ENCODE measurements at regions of chr1 and their contacts with region 1.

Region 1: DNA sequence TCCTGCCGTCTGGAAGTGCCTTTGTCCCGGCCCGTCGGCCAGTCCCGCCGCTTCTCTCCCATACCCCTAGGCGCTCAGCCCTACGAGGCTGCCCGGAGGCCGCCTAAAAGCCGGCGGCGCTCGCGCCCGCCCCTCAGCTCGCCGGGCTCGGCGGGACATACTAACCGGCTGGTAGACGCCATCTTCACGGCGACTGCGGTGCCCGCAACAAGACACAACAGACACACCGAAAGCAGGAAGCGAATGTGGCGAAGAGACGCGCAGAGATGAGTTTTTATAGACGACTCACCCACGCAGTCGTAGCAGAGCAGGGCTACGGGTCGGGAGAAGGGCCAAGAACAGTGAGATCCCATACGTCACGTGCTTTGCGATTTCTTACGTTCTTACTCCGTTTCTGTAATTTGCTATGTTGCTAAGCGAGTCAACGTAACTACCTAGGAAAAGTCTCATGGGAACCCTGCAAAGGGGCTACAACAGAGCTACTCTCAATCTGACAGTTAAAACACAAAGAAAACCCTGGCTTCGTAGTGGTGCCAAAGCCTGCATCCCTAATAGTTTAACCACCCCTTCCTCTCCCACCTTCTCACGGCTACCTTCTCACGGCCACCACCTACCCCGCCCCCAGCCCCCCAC is at the start of gene GTF2B:
- DNase-seq: peak; percentile 98
- ATAC-seq: peak; percentile 92
- H3K4me3 ChIP-seq: peak within 1 kb of the TSS; percentile 84 to 99 (median 89)
- H3K4me3 Mint-ChIP-seq: peak within 1 kb of the TSS; percentile 95
- H3K27ac ChIP-seq: peak within 1 kb of the TSS; percentile 83 to 89
- H3K27ac Mint-ChIP-seq: peak within 1 kb of the TSS; percentile 97
- H3K4me1 ChIP-seq: peaks cover 19 to 28% of the 10 kb centered on the region in 2 donors
- H3K4me1 Mint-ChIP-seq: peaks cover 39% of the 10 kb centered on the region
- H3K27me3 ChIP-seq: no peaks in the 10 kb centered on the region
- H3K27me3 Mint-ChIP-seq: no peaks in the 10 kb centered on the region
- CTCF ChIP-seq: no peak
- total RNA-seq, gene GTF2B: 32.0 and 36.8 TPM in 2 replicates

Region 2: GRCh38 chr1:87335175-87335884 is 1556.1 kb before region 1 on chr1:
- CTCF ChIA-PET with region 1: no interaction called
- POLR2A ChIA-PET with region 1: no interaction called
- intact Hi-C with region 1: loop called (anchors 10 kb)
- DNase-seq: peak; percentile 79
- ATAC-seq: peak; percentile 63
- H3K4me3 ChIP-seq: peak overlapping the region; percentile 47 to 72 (median 66)
- H3K4me3 Mint-ChIP-seq: peak overlapping the region; percentile 83
- H3K27ac ChIP-seq: peak overlapping the region; percentile 46 to 82
- H3K27ac Mint-ChIP-seq: peak overlapping the region; percentile 94
- H3K4me1 ChIP-seq: peaks cover 46 to 49% of the 10 kb centered on the region in 2 donors
- H3K4me1 Mint-ChIP-seq: peaks cover 57% of the 10 kb centered on the region
- H3K27me3 ChIP-seq: no peaks in the 10 kb centered on the region
- H3K27me3 Mint-ChIP-seq: no peaks in the 10 kb centered on the region
- CTCF ChIP-seq: peak; percentile 42

Region 3: DNA sequence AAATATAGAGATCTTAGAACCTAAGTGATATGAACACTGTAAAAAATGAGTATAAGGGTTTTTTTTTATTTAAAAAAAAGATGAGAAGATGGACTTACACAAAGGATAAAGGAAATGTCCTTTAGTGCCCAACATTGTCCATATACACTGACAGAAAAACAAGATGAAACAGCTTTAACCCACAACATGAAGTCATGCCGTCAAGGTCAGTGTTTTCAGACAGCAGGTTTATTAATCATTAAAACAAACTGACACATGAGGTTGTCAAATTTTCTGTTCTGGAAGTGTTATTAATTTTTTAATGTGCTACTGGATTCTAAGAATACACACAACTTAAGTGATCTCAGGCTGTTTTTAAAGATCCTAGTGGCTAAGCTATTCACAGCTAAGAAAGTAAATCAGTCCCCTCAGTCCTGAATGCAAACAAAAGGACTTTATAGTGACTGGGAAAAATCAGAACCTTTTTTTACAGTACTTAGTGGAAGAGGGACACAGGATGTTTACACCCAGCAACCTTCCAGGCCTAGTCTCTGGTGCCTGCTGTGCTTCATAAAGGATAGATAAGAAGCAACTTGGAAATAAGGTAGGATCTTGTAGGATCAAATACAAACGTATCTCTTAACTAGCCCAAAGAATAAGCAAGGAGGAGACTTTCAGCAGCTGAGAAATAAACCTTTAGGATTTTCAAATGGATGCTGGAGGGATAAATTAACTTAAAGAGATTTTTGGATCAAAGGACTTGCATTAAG is 229.3 kb before region 1 on chr1:
- CTCF ChIA-PET with region 1: no interaction called
- POLR2A ChIA-PET with region 1: no interaction called
- intact Hi-C with region 1: no loop called
- DNase-seq: no peak
- ATAC-seq: no peak
- H3K4me3 ChIP-seq: no peak overlapping the region
- H3K4me3 Mint-ChIP-seq: no peak overlapping the region
- H3K27ac ChIP-seq: no peak overlapping the region
- H3K27ac Mint-ChIP-seq: no peak overlapping the region
- H3K4me1 ChIP-seq: peaks cover 7 to 8% of the 10 kb centered on the region in 2 donors
- H3K4me1 Mint-ChIP-seq: peaks cover 16% of the 10 kb centered on the region
- H3K27me3 ChIP-seq: no peaks in the 10 kb centered on the region
- H3K27me3 Mint-ChIP-seq: peaks cover 10% of the 10 kb centered on the region
- CTCF ChIP-seq: no peak

Region 4: DNA sequence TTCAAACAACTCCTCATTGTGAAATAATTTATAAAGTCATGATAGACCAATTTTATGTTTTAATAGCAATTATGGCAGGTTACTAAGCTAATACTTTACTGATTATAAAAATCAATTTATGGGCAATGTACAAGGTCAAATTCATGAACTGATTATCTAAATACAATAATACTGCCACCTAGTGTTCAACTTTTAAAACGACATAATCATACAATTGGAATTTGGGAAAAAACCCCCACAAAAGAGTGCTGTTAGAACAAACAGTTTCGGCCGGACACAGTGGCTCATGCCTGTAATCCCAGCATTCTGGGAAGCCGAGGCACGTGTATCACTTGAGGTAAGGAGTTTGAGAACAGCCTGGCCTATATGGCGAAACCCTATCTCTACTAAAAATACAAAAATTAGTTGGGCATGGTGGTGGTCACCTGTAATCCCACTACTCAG is 14.0 kb before region 1 on chr1:
- CTCF ChIA-PET with region 1: interaction called, 10 read pairs
- POLR2A ChIA-PET with region 1: no interaction called
- intact Hi-C with region 1: no loop called
- DNase-seq: peak; percentile 47
- ATAC-seq: no peak
- H3K4me3 ChIP-seq: no peak overlapping the region
- H3K4me3 Mint-ChIP-seq: no peak overlapping the region
- H3K27ac ChIP-seq: no peak overlapping the region
- H3K27ac Mint-ChIP-seq: no peak overlapping the region
- H3K4me1 ChIP-seq: no peaks in the 10 kb centered on the region
- H3K4me1 Mint-ChIP-seq: peaks cover 20% of the 10 kb centered on the region
- H3K27me3 ChIP-seq: no peaks in the 10 kb centered on the region
- H3K27me3 Mint-ChIP-seq: no peaks in the 10 kb centered on the region
- CTCF ChIP-seq: peak; percentile 81

Region 5: GRCh38 chr1:89065079-89065868 is 173.8 kb after region 1 on chr1 and contains the start of gene GBP1:
- CTCF ChIA-PET with region 1: no interaction called
- POLR2A ChIA-PET with region 1: no interaction called
- intact Hi-C with region 1: loop called (anchors 1 kb)
- DNase-seq: peak; percentile 58
- ATAC-seq: peak; percentile 70
- H3K4me3 ChIP-seq: peak within 1 kb of the TSS; percentile 50 to 94 (median 58)
- H3K4me3 Mint-ChIP-seq: peak within 1 kb of the TSS; percentile 96
- H3K27ac ChIP-seq: peak within 1 kb of the TSS; percentile 62 to 74
- H3K27ac Mint-ChIP-seq: peak within 1 kb of the TSS; percentile 92
- H3K4me1 ChIP-seq: peaks cover 21 to 30% of the 10 kb centered on the region in 2 donors
- H3K4me1 Mint-ChIP-seq: peaks cover 42% of the 10 kb centered on the region
- H3K27me3 ChIP-seq: no peaks in the 10 kb centered on the region
- H3K27me3 Mint-ChIP-seq: no peaks in the 10 kb centered on the region
- CTCF ChIP-seq: no peak
- total RNA-seq, gene GBP1: 9.4 and 9.8 TPM in 2 replicates

Region 6: DNA sequence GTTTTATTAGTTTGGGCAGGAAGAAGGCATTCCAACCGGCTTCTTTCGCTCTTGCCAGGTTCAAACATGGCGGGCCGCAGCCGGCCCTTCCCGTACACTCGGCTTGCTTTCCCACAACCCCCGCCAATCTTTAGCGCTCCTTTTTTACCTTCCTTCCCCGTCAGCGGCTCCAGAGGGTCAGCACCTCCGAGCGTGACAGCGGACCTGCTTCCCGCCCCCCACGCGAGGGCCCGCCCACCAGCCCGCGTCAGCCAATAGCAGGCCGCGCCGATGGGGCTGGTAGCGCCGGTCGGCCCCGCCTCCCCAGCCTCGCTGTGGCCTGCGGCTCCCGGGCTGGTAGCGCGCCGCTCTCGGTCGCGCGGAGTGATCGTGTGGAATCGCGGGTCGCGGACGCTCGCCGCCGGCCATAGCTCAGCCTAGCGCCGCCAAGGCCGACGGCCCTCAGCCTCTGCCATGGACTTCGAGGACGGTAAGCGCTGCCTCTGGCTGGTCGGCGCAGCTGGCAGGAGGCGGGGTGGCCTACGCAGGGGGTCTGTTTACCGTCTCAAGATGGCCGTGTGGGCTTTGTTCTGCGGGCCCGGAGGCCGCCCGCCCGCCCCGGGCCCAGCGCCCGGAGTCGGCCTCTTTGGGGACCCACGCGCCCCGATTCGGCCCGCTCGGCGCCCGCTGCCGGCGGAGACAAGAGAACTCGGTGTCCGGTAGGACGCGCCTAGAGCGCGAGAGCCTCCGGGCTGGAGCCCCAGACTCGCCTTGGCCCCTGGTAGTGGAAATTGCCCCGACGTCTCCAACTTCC is 1103.6 kb after region 1 on chr1 and contains the start of gene ZNF326:
- CTCF ChIA-PET with region 1: no interaction called
- POLR2A ChIA-PET with region 1: no interaction called
- intact Hi-C with region 1: loop called (anchors 5 kb)
- DNase-seq: peak; percentile 94
- ATAC-seq: peak; percentile 97
- H3K4me3 ChIP-seq: peak within 1 kb of the TSS; percentile 72 to 95 (median 80)
- H3K4me3 Mint-ChIP-seq: peak within 1 kb of the TSS; percentile 99
- H3K27ac ChIP-seq: peak within 1 kb of the TSS; percentile 85 to 87
- H3K27ac Mint-ChIP-seq: peak within 1 kb of the TSS; percentile 96
- H3K4me1 ChIP-seq: peaks cover 8 to 12% of the 10 kb centered on the region in 2 donors
- H3K4me1 Mint-ChIP-seq: peaks cover 32% of the 10 kb centered on the region
- H3K27me3 ChIP-seq: no peaks in the 10 kb centered on the region
- H3K27me3 Mint-ChIP-seq: no peaks in the 10 kb centered on the region
- CTCF ChIP-seq: no peak
- total RNA-seq, gene ZNF326: 32.0 and 34.1 TPM in 2 replicates

Measured in B cell (primary cell).